ENCODE measurements at regions of chr6 and their contacts with region 1.

Region 1: GRCh38 chr6:41683510-41684310 is 45.4 kb downstream of the MDFI start:
- DNase-seq: peak; percentile 85 to 95
- H3K4me3 ChIP-seq: peak overlapping the region; percentile 30 to 45 (median 44)
- H3K27ac ChIP-seq: peak overlapping the region; percentile 32 to 63 (median 53)
- H3K4me1 ChIP-seq: peaks cover 17 to 41% (median 36%) of the 10 kb centered on the region in 4 donors
- H3K27me3 ChIP-seq: no peaks in the 10 kb centered on the region
- CTCF ChIP-seq: peak in 5 of 7 experiments; percentile 86 to 94 (median 89)
- EP300 ChIP-seq: no peak
- POLR2A ChIP-seq: no peak

Region 2: DNA sequence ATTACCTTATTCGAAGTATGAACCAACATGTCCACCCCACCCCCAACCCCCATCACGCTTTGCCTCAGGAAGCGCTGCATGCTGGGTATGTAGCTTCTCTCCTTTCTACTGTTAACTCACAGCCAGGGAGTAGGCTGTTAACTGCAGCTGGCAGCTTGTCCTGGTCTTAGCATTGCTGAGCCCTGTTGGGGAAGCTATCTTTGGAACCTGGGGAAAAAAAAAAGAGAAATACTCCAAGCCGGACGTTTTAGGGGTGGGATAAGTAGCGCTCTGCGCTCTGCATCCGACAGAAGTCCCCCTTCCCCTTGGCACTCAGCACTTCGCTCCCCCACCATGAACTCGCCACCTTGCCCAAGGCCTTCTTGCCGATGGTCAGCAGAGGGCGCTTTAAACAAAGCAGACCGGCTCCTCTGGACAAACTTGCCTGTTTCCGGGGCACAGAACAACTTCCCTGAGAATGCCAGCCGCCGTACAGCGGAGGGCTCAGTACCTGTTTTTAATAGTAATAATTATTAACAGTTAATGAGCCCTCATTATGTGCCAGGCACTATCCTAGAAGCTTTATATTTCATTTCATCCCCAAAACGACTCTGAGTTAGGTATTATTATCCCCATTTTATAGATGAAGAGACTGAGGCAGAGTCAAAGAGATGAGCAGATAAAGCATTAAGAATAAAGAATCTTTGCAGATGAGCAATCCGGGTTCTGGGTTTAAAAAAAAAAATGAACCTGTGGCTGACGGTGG is 80.7 kb before region 1 on chr6:
- intact Hi-C with region 1: loop called (anchors 5 kb)
- DNase-seq: peak; percentile 79 to 96
- H3K4me3 ChIP-seq: peak overlapping the region in 1 of 4 donors; percentile 6
- H3K27ac ChIP-seq: peak overlapping the region in 3 of 5 donors; percentile 23 to 62 (median 46)
- H3K4me1 ChIP-seq: peaks cover 3 to 30% (median 22%) of the 10 kb centered on the region in 4 donors
- H3K27me3 ChIP-seq: peaks cover 0 to 7% (median 0%) of the 10 kb centered on the region in 3 donors
- CTCF ChIP-seq: peak in 5 of 7 experiments; percentile 82 to 89 (median 84)
- EP300 ChIP-seq: no peak
- POLR2A ChIP-seq: no peak